Sigmoid colon (tissue), 7 donors: ENCODE measurements at regions of chr3 and their contacts with region 1.

Region 1: GRCh38 chr3:45210308-45211041 is 15.6 kb downstream of the TMEM158 start:
- DNase-seq: peak; percentile 94
- H3K4me3 ChIP-seq: no peak overlapping the region
- H3K27ac ChIP-seq: peak overlapping the region; percentile 2 to 85 (median 80)
- H3K4me1 ChIP-seq: peaks cover 0 to 44% (median 34%) of the 10 kb centered on the region in 4 donors
- H3K27me3 ChIP-seq: no peaks in the 10 kb centered on the region
- CTCF ChIP-seq: peak; percentile 76 to 98 (median 92)
- EP300 ChIP-seq: no peak
- POLR2A ChIP-seq: no peak

Region 2: GRCh38 chr3:45055411-45056143 is 154.9 kb before region 1 on chr3:
- intact Hi-C with region 1: loop called (anchors 5 kb)
- DNase-seq: no peak
- H3K4me3 ChIP-seq: no peak overlapping the region
- H3K27ac ChIP-seq: peak overlapping the region in 3 of 4 donors; percentile 71 to 79 (median 73)
- H3K4me1 ChIP-seq: peaks cover 0 to 44% (median 35%) of the 10 kb centered on the region in 4 donors
- H3K27me3 ChIP-seq: no peaks in the 10 kb centered on the region
- CTCF ChIP-seq: no peak
- EP300 ChIP-seq: no peak
- POLR2A ChIP-seq: no peak

Region 3: DNA sequence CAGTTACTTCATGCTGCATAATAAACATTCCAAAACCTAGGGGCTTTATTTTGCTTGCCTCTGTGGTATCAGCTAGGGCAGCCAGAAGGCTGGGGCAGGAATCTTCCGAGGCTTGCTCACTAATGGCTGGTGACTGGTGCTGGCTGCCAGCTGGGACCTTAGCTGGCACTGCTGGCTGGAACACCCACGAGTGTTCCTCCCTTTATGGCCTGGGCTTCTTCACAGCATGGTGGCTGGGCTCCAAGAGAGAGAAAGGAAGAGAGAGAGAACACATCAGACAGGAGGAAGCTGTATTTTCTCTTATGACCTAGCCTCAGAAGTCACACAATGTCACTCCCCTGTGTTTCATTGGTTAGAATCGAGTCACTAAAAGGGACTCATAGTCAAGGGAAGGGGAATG is 40.4 kb before region 1 on chr3:
- intact Hi-C with region 1: loop called (anchors 5 kb)
- DNase-seq: peak; percentile 91
- H3K4me3 ChIP-seq: no peak overlapping the region
- H3K27ac ChIP-seq: peak overlapping the region; percentile 30 to 71 (median 58)
- H3K4me1 ChIP-seq: peaks cover 0 to 46% (median 26%) of the 10 kb centered on the region in 4 donors
- H3K27me3 ChIP-seq: no peaks in the 10 kb centered on the region
- CTCF ChIP-seq: no peak
- EP300 ChIP-seq: peak; percentile 17 to 74 (median 52)
- POLR2A ChIP-seq: no peak

Region 4: DNA sequence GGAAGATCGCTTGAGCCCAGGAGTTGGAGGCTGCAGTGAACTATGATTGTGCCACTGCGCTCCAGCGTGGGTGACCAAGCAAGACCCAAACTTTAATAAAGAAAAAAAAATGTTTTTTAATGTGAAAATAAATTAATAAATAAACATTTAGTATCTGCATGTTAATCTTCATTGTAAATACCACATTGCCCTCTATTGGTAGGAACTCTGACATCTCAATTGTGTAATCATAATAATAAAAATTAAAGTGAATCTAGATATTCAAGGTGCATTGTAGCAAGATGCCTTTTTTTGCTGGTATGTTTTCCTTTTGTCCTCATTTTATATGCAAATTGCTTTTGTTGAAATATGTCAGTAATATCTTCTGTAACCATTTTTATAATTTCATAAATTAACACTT is 289.1 kb after region 1 on chr3:
- intact Hi-C with region 1: loop called (anchors 5 kb)
- DNase-seq: no peak
- H3K4me3 ChIP-seq: no peak overlapping the region
- H3K27ac ChIP-seq: no peak overlapping the region
- H3K4me1 ChIP-seq: peaks cover 0 to 12% (median 11%) of the 10 kb centered on the region in 4 donors
- H3K27me3 ChIP-seq: no peaks in the 10 kb centered on the region
- CTCF ChIP-seq: peak; percentile 35 to 46 (median 42)
- EP300 ChIP-seq: no peak
- POLR2A ChIP-seq: no peak